Posterior vena cava (tissue), 2 donors: ENCODE measurements at regions of chr14 and their contacts with region 1.

Region 1: GRCh38 chr14:62654641-62655040 is 390.6 kb downstream of the KCNH5 start:
- DNase-seq: no peak

Region 2: GRCh38 chr14:61153431-61153830 is 1501.2 kb before region 1 on chr14:
- intact Hi-C with region 1: loop called in 1 of 2 experiments (anchors 10 kb)
- DNase-seq: no peak

Region 3: GRCh38 chr14:62629176-62629725 is 25.4 kb before region 1 on chr14:
- intact Hi-C with region 1: loop called in 1 of 2 experiments (anchors 1 kb)
- DNase-seq: no peak